ENCODE measurements at regions of chr7 and their contacts with region 1.

Region 1: GRCh38 chr7:149195180-149196150 is at the start of gene ZNF282:
- DNase-seq: peak; percentile 93 to 96
- ATAC-seq: peak; percentile 97
- H3K4me3 ChIP-seq: peak within 1 kb of the TSS; percentile 82 to 86
- H3K27ac ChIP-seq: peak within 1 kb of the TSS in 1 of 2 donors; percentile 66
- H3K4me1 ChIP-seq: no peaks in the 10 kb centered on the region
- H3K27me3 ChIP-seq: no peaks in the 10 kb centered on the region
- total RNA-seq, gene ZNF282: 15.5 to 21.4 TPM

Region 2: GRCh38 chr7:149239345-149240191 is 44.1 kb after region 1 on chr7 and contains the start of gene ZNF212:
- intact Hi-C with region 1: loop called in 1 of 2 experiments (anchors 5 kb)
- DNase-seq: peak; percentile 94 to 96
- ATAC-seq: peak; percentile 100
- H3K4me3 ChIP-seq: peak within 1 kb of the TSS; percentile 70 to 82
- H3K27ac ChIP-seq: no peak within 1 kb of the TSS
- H3K4me1 ChIP-seq: no peaks in the 10 kb centered on the region
- H3K27me3 ChIP-seq: no peaks in the 10 kb centered on the region
- total RNA-seq, gene ZNF212: 7.8 to 11.7 TPM

Measured in aorta (tissue), 5 donors.